Posterior vena cava (tissue), 2 donors: ENCODE measurements at regions of chr11 and their contacts with region 1.

Region 1: GRCh38 chr11:82718307-82718706 is 15.4 kb downstream of the FAM181B start:
- DNase-seq: no peak

Region 2: DNA sequence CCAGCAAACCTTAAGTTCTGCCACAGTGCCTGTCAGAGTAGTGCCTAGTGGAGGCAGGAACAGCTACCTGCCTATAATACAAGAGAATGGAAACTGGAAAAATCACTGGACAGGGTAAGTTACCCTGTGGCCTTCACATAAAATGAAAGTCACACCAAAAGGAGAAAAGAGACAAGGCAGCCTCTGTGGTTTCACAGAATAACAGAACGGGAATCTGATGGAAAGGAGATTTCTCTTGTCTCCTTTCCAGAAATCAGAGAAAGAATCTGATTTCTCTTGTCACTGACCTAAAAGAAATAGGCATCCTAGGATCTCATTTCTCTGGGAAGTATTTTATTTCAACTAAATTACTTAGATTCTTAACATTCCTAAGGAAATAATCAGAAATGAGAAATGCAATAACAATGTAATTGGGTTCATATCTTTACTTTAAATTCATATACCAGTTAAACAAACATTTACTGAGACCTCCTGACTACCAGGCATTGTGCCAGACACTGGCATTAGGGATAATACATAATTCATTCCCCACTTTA is 140.3 kb after region 1 on chr11:
- intact Hi-C with region 1: loop called in 1 of 2 experiments (anchors 10 kb)
- DNase-seq: no peak